CD8-positive, alpha-beta T cell (primary cell): ENCODE measurements at regions of chr1 and their contacts with region 1.

Region 1: DNA sequence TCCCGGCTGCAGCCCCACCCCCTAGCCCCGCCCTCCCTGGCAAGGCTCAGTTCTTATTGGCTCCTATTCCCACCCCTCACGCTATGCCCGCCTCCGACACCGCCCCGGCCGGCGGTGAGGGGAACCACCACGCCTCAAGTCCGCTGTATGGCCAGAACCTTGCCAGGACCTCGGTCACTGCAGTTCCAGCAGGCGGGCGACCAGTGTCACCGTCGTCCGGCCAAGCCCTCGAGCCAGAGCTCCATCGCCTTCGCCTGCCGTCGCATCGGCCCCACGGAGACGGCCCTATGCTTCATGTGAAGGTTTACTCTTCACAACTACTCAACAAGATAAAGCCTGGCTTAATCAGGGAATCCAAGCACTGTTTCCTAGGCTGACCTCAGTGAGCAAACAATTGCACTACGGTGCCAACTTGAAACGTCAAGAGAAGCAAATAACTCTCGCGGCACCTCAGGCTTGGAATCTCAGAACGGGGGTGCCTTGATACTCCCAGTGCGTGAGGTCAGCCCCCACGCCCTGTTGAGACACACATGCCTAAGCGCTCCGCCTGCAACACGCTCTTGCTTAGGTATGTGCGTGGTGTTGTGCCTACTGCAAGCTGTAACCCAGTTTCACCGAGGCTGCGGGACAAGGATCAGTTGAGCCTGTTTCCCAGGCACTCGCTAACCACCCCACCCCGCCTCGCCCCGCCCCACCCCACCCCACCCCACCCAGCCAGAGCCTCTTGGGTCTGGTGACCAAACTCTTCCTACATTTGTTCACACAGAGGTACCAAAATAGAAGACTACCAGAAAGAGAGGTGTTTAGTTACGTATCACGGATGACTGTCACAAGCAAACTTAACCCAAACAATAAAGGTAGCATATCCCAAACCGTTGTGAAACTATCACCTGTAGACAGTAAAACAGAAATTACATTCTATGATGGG is 498 bp upstream of the DENND2C start:
- DNase-seq: peak in 8 of 9 experiments; percentile 2 to 90 (median 86)
- ATAC-seq: peak; percentile 96
- H3K4me3 ChIP-seq: peak overlapping the region; percentile 77 to 79
- H3K4me3 Mint-ChIP-seq: peak overlapping the region; percentile 98
- H3K27ac ChIP-seq: peak overlapping the region in 1 of 2 experiments; percentile 49
- H3K27ac Mint-ChIP-seq: peak overlapping the region; percentile 92
- H3K4me1 ChIP-seq: peaks cover 5% of the 10 kb centered on the region
- H3K4me1 Mint-ChIP-seq: peaks cover 14% of the 10 kb centered on the region
- H3K27me3 ChIP-seq: no peaks in the 10 kb centered on the region
- H3K27me3 Mint-ChIP-seq: peaks cover 11% of the 10 kb centered on the region
- CTCF ChIP-seq: no peak

Region 2: DNA sequence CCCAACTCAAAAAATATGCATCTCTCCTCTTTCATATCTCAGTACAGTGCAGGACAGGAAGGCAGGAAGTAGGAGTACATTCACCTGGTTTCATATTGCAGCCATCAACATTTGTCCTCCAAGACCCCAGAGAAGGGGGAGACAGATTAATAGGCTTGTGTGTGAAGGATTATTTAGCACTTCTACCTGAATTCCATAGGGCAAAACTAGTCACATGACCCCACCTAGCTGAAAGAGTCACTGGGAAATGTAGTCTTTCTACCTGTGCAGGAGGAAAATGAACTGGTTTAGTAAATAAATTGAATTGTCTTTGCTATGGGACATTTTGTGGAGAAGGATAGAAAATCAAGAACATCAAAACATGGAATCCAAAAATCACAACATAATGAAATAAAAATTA is 145.4 kb before region 1 on chr1:
- CTCF ChIA-PET with region 1: no interaction called
- POLR2A ChIA-PET with region 1: no interaction called
- intact Hi-C with region 1: no loop called
- DNase-seq: peak in 1 of 9 experiments; percentile 20
- ATAC-seq: no peak
- H3K4me3 ChIP-seq: no peak overlapping the region
- H3K4me3 Mint-ChIP-seq: no peak overlapping the region
- H3K27ac ChIP-seq: no peak overlapping the region
- H3K27ac Mint-ChIP-seq: no peak overlapping the region
- H3K4me1 ChIP-seq: no peaks in the 10 kb centered on the region
- H3K4me1 Mint-ChIP-seq: no peaks in the 10 kb centered on the region
- H3K27me3 ChIP-seq: peaks cover 0 to 2% of the 10 kb centered on the region in 2 experiments
- H3K27me3 Mint-ChIP-seq: peaks cover 6% of the 10 kb centered on the region
- CTCF ChIP-seq: no peak

Region 3: DNA sequence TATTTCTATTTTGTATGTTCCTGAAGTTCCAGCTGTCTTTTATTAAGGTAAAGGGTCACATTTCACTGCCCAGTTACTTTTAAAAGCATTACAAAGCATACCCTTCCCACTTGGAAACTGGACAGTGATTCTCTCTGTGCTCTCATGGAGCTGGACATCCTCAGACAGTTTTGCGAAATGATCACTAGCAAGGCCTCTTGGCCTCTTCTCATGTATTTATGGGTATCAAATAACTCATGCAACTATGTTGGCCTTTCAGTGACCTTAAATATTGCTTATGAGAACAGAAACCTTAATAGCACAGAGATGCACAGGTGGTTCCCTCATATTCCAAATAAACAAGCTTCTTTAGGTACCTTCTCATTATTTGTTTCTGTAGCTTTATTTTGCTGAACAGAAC is 32.9 kb after region 1 on chr1:
- CTCF ChIA-PET with region 1: no interaction called
- POLR2A ChIA-PET with region 1: no interaction called
- intact Hi-C with region 1: no loop called
- DNase-seq: no peak
- ATAC-seq: no peak
- H3K4me3 ChIP-seq: no peak overlapping the region
- H3K4me3 Mint-ChIP-seq: no peak overlapping the region
- H3K27ac ChIP-seq: no peak overlapping the region
- H3K27ac Mint-ChIP-seq: no peak overlapping the region
- H3K4me1 ChIP-seq: no peaks in the 10 kb centered on the region
- H3K4me1 Mint-ChIP-seq: no peaks in the 10 kb centered on the region
- H3K27me3 ChIP-seq: no peaks in the 10 kb centered on the region
- H3K27me3 Mint-ChIP-seq: no peaks in the 10 kb centered on the region
- CTCF ChIP-seq: no peak

Region 4: GRCh38 chr1:114716304-114717170 is 46.2 kb after region 1 on chr1 and contains the start of gene NRAS:
- CTCF ChIA-PET with region 1: no interaction called
- POLR2A ChIA-PET with region 1: interaction called, 3 read pairs
- intact Hi-C with region 1: loop called (anchors 1 kb)
- DNase-seq: peak; percentile 91 to 97 (median 97)
- ATAC-seq: peak; percentile 94
- H3K4me3 ChIP-seq: peak within 1 kb of the TSS; percentile 84 to 87
- H3K4me3 Mint-ChIP-seq: peak within 1 kb of the TSS; percentile 97
- H3K27ac ChIP-seq: peak within 1 kb of the TSS; percentile 94 to 99
- H3K27ac Mint-ChIP-seq: peak within 1 kb of the TSS; percentile 100
- H3K4me1 ChIP-seq: peaks cover 16% of the 10 kb centered on the region
- H3K4me1 Mint-ChIP-seq: peaks cover 34% of the 10 kb centered on the region
- H3K27me3 ChIP-seq: no peaks in the 10 kb centered on the region
- H3K27me3 Mint-ChIP-seq: no peaks in the 10 kb centered on the region
- CTCF ChIP-seq: no peak
- total RNA-seq, gene NRAS: 46.0 to 46.4 TPM

Region 5: GRCh38 chr1:115524236-115524635 is 853.9 kb after region 1 on chr1:
- CTCF ChIA-PET with region 1: no interaction called
- POLR2A ChIA-PET with region 1: no interaction called
- intact Hi-C with region 1: no loop called
- DNase-seq: no peak
- ATAC-seq: no peak
- H3K4me3 ChIP-seq: no peak overlapping the region
- H3K4me3 Mint-ChIP-seq: no peak overlapping the region
- H3K27ac ChIP-seq: no peak overlapping the region
- H3K27ac Mint-ChIP-seq: no peak overlapping the region
- H3K4me1 ChIP-seq: no peaks in the 10 kb centered on the region
- H3K4me1 Mint-ChIP-seq: no peaks in the 10 kb centered on the region
- H3K27me3 ChIP-seq: no peaks in the 10 kb centered on the region
- H3K27me3 Mint-ChIP-seq: peaks cover 4% of the 10 kb centered on the region
- CTCF ChIP-seq: no peak